Mucosa of descending colon (tissue), 3 donors: ENCODE measurements at regions of chr3 and their contacts with region 1.

Region 1: DNA sequence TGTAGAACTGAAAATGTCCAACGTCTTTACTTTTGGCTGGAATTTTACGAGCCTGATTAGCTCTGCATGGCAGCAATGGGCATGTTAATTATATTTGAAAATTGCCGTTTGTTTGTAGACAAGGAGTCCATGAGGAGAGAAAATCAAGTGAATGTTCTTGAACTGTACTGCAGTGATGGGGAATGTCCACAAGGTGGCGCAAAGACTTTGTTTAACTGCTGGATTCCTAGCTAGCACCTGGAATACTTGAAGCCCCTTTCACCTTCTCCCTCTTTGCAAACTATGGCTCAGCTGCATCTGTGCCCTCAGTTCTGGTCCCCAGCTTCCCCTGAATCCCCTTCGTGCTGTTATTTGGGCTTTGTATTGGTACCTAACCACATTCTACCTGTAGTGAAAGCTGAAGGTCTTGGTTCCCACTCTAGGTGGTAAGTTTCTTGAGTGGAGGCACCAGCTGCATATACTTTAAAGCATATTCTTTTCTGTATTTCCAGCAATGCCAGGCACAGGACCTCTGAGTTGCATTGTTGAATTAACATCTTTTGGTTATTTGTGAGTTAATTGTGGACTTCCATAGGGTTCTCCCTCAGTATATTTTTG is 25.3 kb downstream of the EXOG start:
- DNase-seq: peak in 2 of 3 donors; percentile 34 to 77
- ATAC-seq: peak; percentile 75
- H3K4me3 ChIP-seq: no peak overlapping the region
- H3K4me1 ChIP-seq: no peaks in the 10 kb centered on the region
- CTCF ChIP-seq: peak; percentile 82

Region 2: DNA sequence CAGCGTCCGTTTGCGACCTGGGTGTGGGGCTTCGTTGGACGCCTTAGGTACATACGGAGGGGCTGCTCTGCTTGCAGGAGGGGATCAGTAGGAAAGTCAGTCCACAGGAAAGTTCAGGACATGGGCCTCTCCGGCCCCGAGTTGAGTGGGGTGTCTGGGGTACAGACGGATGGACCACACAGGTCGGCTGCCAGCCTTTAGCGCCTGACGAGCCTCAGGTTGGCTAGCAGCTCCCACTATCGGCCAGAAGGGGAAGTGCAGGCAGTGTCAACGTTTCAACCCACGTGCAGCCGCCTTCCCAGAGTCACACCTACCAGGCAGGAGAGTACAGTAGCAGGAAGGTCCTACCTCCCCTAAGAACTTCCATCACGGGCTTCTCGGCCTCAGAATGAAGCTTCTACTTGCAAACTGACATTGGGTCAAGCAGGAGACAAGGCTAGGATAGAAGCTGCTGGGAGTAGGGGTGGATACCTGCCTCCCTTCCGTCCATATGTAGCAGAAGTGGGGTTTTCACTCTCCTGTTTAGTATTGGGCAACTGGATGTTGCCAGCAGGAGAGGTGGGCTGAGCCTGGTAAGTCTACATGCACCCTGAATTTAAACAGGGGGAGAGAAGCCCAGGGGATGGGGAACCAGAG is 129.8 kb after region 1 on chr3:
- intact Hi-C with region 1: loop called (anchors 5 to 10 kb)
- DNase-seq: peak; percentile 70 to 81 (median 78)
- ATAC-seq: peak; percentile 87
- H3K4me3 ChIP-seq: no peak overlapping the region
- H3K4me1 ChIP-seq: peaks cover 7% of the 10 kb centered on the region
- CTCF ChIP-seq: peak; percentile 96